ENCODE measurements at regions of chr2 and their contacts with region 1.

Region 1: DNA sequence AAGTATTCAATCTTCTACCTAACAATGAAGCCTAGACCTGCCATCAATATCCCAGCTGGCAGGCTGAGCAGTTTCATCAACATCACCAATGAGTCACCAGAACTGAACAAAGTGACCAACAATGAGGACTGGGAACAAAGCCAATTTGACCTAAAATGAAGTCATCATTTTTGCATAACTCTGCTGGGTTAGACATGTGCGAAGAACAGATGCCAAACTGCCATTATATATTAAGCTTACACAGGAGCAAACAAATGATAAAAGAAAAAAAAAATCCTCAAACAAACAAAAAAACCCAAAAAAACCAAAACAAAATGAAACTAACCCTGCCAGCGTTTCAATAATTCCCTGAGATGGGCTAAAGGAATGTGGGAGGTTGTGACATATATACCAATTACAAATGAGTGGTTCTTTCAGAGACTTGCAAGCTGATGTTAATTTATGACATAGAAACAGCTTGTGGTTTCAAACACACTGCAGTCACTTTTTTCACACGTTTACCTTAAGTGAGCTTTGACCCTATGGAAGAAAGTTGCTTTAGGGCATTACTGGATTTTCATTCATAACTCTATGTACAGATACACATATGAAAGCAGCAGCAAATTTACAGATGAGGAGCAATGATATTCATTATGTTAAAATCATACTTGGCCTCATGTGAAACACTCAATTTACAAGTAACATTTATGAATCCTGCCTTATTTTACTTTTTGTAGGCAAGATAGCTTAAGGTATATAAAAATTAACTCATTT is 56.9 kb upstream of the CCDC141 start:
- DNase-seq: peak; percentile 42
- ATAC-seq: peak; percentile 70
- H3K4me3 Mint-ChIP-seq: peak overlapping the region; percentile 3
- H3K27ac Mint-ChIP-seq: peak overlapping the region; percentile 40
- H3K4me1 Mint-ChIP-seq: peaks cover 35% of the 10 kb centered on the region
- H3K27me3 Mint-ChIP-seq: no peaks in the 10 kb centered on the region
- CTCF ChIP-seq: no peak

Region 2: DNA sequence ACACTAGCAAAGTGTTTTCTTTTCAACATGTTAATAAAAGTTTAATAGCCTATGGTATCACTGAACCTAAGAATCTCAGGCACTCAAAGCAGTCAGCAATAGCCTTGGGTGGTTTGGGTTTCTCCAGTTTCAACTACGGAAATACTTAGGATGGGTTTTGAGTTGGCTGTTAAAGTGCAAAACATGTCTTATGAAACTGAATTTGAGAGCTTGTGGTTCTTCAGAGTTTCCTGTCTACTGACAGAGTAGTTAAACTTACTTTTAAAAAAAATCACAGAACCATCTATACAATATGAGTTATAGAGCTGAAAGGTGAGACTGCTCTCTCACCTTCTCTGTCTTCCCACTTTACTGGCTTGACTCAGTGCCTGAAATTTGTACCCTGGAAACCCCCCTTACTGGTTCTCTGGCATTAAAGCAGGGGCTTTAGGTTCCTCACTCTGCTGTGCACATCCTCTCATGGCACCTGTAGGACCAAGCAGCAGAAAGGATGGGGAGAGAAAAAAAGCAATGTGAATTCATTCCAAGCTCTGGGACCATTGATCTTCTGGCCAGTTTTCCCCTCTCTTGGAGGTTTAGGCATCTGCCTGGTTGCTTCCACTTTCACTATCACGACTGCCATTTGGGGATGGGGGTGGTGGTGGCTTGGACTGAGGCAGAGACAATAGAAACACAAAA is 75.0 kb before region 1 on chr2:
- CTCF ChIA-PET with region 1: no interaction called
- POLR2A ChIA-PET with region 1: interaction called, 4 read pairs
- intact Hi-C with region 1: loop called (anchors 5 kb)
- DNase-seq: peak; percentile 61
- ATAC-seq: peak; percentile 90
- H3K4me3 Mint-ChIP-seq: peak overlapping the region; percentile 71
- H3K27ac Mint-ChIP-seq: peak overlapping the region; percentile 92
- H3K4me1 Mint-ChIP-seq: peaks cover 37% of the 10 kb centered on the region
- H3K27me3 Mint-ChIP-seq: no peaks in the 10 kb centered on the region
- CTCF ChIP-seq: no peak

Region 3: GRCh38 chr2:179068991-179069643 is 37.7 kb before region 1 on chr2:
- CTCF ChIA-PET with region 1: no interaction called
- POLR2A ChIA-PET with region 1: no interaction called
- intact Hi-C with region 1: no loop called
- DNase-seq: no peak
- ATAC-seq: no peak
- H3K4me3 Mint-ChIP-seq: no peak overlapping the region
- H3K27ac Mint-ChIP-seq: no peak overlapping the region
- H3K4me1 Mint-ChIP-seq: peaks cover 2% of the 10 kb centered on the region
- H3K27me3 Mint-ChIP-seq: no peaks in the 10 kb centered on the region
- CTCF ChIP-seq: no peak

Region 4: GRCh38 chr2:179460181-179460929 is 353.5 kb after region 1 on chr2:
- CTCF ChIA-PET with region 1: no interaction called
- POLR2A ChIA-PET with region 1: no interaction called
- intact Hi-C with region 1: no loop called
- DNase-seq: no peak
- ATAC-seq: no peak
- H3K4me3 Mint-ChIP-seq: no peak overlapping the region
- H3K27ac Mint-ChIP-seq: no peak overlapping the region
- H3K4me1 Mint-ChIP-seq: no peaks in the 10 kb centered on the region
- H3K27me3 Mint-ChIP-seq: no peaks in the 10 kb centered on the region
- CTCF ChIP-seq: no peak

Measured in activated CD8-positive, alpha-beta T cell treated with anti-CD3 and anti-CD28 coated beads for 36 hours (primary cell).